MCF 10A (cell line): ENCODE measurements at regions of chr5 and their contacts with region 1.

Region 1: GRCh38 chr5:149551200-149552037 is at the start of gene CSNK1A1:
- DNase-seq: peak; percentile 100
- H3K4me3 Mint-ChIP-seq: peak within 1 kb of the TSS; percentile 89
- H3K27ac Mint-ChIP-seq: peak within 1 kb of the TSS; percentile 99
- H3K4me1 Mint-ChIP-seq: peaks cover 10% of the 10 kb centered on the region
- H3K27me3 Mint-ChIP-seq: no peaks in the 10 kb centered on the region
- CTCF ChIP-seq: peak; percentile 97
- total RNA-seq, gene CSNK1A1: 666 and 744 TPM in 2 replicates

Region 2: GRCh38 chr5:149345147-149345875 is 206.1 kb before region 1 on chr5 and contains the start of gene GRPEL2:
- CTCF ChIA-PET with region 1: no interaction called
- POLR2A ChIA-PET with region 1: interaction called, 17 read pairs
- intact Hi-C with region 1: no loop called
- DNase-seq: peak; percentile 99
- H3K4me3 Mint-ChIP-seq: peak within 1 kb of the TSS; percentile 96
- H3K27ac Mint-ChIP-seq: peak within 1 kb of the TSS; percentile 94
- H3K4me1 Mint-ChIP-seq: peaks cover 22% of the 10 kb centered on the region
- H3K27me3 Mint-ChIP-seq: no peaks in the 10 kb centered on the region
- CTCF ChIP-seq: no peak
- total RNA-seq, gene GRPEL2: 69.5 and 86.6 TPM in 2 replicates

Region 3: GRCh38 chr5:149448831-149449714 is 102.3 kb before region 1 on chr5:
- CTCF ChIA-PET with region 1: interaction called, 202 read pairs
- POLR2A ChIA-PET with region 1: interaction called, 108 read pairs
- intact Hi-C with region 1: no loop called
- DNase-seq: peak; percentile 54
- H3K4me3 Mint-ChIP-seq: no peak overlapping the region
- H3K27ac Mint-ChIP-seq: peak overlapping the region; percentile 55
- H3K4me1 Mint-ChIP-seq: peaks cover 45% of the 10 kb centered on the region
- H3K27me3 Mint-ChIP-seq: no peaks in the 10 kb centered on the region
- CTCF ChIP-seq: no peak

Region 4: GRCh38 chr5:149517461-149518122 is 33.8 kb before region 1 on chr5:
- CTCF ChIA-PET with region 1: interaction called, 7 read pairs
- POLR2A ChIA-PET with region 1: interaction called, 379 read pairs
- intact Hi-C with region 1: no loop called
- DNase-seq: peak; percentile 43
- H3K4me3 Mint-ChIP-seq: peak overlapping the region; percentile 36
- H3K27ac Mint-ChIP-seq: peak overlapping the region; percentile 52
- H3K4me1 Mint-ChIP-seq: peaks cover 63% of the 10 kb centered on the region
- H3K27me3 Mint-ChIP-seq: no peaks in the 10 kb centered on the region
- CTCF ChIP-seq: no peak

Region 5: DNA sequence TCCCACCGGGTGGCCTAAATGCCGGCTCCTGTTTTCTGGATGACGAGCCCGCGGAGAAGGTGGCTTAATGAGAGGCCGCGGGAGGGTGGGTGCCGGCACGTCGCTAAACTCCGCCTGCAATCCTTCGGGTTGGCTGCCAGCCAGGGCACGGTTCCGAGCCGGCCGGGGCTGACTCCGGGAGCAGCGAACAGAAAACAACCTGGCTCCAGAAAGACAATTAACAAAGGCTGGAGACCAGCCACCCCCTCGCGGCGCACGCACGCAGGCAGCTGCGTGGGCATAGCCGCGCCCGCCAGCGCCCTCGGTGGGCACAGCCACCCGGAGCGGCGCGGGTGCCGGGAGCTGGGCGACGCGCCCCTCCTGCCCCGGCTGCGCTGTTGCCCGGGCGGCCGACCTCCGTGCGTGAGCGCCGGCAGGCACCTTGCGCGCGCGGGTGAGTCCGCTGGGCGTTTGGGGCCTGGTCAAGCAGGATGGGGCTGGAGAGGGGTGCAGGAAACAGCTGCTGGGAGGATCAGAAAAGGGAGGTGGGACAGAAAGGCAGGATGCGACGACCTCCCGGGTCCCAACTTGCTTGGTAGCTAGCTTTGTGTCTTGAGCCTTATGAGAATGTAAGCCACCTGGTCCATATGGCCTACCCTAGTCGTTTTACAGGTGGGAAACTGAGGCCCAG is 29.9 kb after region 1 on chr5 and contains the start of gene ARHGEF37:
- CTCF ChIA-PET with region 1: interaction called, 7 read pairs
- POLR2A ChIA-PET with region 1: interaction called, 74 read pairs
- intact Hi-C with region 1: no loop called
- DNase-seq: peak; percentile 83
- H3K4me3 Mint-ChIP-seq: peak within 1 kb of the TSS; percentile 75
- H3K27ac Mint-ChIP-seq: peak within 1 kb of the TSS; percentile 76
- H3K4me1 Mint-ChIP-seq: peaks cover 26% of the 10 kb centered on the region
- H3K27me3 Mint-ChIP-seq: no peaks in the 10 kb centered on the region
- CTCF ChIP-seq: no peak
- total RNA-seq, gene ARHGEF37: 3.9 and 5.1 TPM in 2 replicates

Region 6: DNA sequence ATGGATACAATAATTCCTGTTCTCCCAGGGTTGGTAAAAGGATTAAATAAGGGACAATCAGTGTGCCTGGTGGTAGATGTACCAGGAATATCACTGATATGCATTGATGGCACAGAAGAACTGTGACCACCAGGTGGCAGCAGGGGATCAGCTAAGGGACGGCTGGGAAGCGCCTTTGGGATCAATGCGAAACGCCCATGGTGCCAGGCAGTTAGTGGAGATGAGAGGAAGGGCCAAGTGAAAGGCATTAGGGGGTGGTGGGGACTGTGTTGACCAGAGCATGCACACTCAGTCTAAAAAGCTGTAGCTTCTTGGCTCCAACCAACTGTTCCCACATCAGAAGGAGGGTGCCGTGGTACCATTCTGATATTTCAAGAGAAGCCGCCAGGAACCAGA is 85.4 kb after region 1 on chr5:
- CTCF ChIA-PET with region 1: no interaction called
- POLR2A ChIA-PET with region 1: interaction called, 21 read pairs
- intact Hi-C with region 1: no loop called
- DNase-seq: peak; percentile 90
- H3K4me3 Mint-ChIP-seq: no peak overlapping the region
- H3K27ac Mint-ChIP-seq: no peak overlapping the region
- H3K4me1 Mint-ChIP-seq: peaks cover 47% of the 10 kb centered on the region
- H3K27me3 Mint-ChIP-seq: no peaks in the 10 kb centered on the region
- CTCF ChIP-seq: peak; percentile 98